Psoas muscle (tissue), 8 donors: ENCODE measurements at regions of chr16 and their contacts with region 1.

Region 1: DNA sequence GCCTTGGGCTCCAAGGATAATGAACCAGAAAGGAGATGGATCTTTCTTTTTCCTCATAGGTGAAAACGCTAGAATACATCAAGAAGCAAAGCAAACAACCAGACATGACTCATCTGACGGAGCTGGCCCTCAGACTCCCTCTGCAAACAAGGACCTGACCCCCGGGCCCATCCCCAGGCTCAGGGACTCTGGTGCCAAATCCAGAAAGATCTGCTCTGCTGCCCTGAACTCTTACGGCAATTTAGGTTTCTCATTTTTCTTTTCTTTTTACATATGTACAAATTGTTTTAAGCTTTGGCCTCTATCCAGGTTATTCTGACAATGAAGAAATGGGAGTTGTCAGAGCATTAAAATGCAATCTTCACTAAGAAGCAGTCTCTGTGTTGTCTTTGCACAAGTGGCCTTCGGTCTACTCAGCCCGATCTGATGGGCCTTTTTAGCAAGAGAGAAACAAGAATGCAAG is 17.7 kb downstream of the KNOP1 start:
- DNase-seq: no peak
- ATAC-seq: no peak
- H3K4me3 ChIP-seq: no peak overlapping the region
- H3K27ac ChIP-seq: peak overlapping the region; percentile 55
- H3K4me1 ChIP-seq: peaks cover 48% of the 10 kb centered on the region
- H3K27me3 ChIP-seq: no peaks in the 10 kb centered on the region
- CTCF ChIP-seq: no peak

Region 2: DNA sequence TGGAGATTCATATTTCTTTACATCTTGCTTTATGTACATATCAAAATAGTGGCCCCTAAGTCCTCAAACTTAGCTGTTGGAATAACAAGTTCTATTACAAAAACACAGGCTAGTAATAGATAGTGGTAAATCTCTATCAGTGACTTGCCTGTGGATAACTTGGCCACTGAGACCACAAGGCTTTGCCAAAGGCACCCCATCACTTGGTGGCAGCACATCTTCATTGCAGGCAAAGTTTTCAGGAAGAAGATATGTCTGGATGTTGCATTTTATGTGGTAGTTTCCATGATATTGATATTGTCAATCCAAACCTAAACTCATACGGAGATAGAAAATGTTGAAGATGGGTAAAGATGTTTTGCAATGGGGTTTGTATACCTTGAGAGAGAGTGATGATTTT is 40.8 kb before region 1 on chr16:
- intact Hi-C with region 1: loop called in 1 of 2 experiments (anchors 5 kb)
- DNase-seq: no peak
- ATAC-seq: no peak
- H3K4me3 ChIP-seq: no peak overlapping the region
- H3K27ac ChIP-seq: no peak overlapping the region
- H3K4me1 ChIP-seq: no peaks in the 10 kb centered on the region
- H3K27me3 ChIP-seq: no peaks in the 10 kb centered on the region
- CTCF ChIP-seq: no peak

Region 3: GRCh38 chr16:19745286-19746010 is 45.1 kb after region 1 on chr16:
- intact Hi-C with region 1: no loop called
- DNase-seq: no peak
- ATAC-seq: no peak
- H3K4me3 ChIP-seq: no peak overlapping the region
- H3K27ac ChIP-seq: no peak overlapping the region
- H3K4me1 ChIP-seq: no peaks in the 10 kb centered on the region
- H3K27me3 ChIP-seq: no peaks in the 10 kb centered on the region
- CTCF ChIP-seq: no peak

Region 4: DNA sequence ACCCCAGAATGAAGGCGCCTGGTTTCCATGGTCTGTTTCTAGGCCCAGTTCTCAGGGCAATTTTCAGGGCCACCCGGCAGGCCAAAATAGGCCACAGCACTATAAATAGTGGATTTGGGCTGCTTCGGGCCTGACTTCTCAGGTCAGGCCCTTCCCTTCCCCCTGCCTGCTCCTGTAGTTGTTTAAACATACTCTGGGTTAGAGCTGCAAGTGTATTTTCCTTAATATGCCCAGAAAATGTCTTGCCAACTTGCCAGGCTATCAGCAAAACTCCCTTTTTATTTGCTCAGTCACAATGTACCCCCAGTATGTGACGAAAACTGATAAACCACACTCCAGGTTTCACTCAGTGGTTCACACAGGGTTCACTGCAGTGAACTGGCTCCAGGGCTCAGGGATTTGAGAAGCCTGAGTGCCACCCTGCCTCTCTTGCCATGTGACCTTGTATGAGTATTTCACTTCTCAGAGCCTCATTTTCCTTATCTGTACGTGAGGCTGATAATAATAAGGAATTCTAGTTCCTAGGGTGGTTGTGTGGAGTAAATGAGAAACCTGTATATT is 107.8 kb after region 1 on chr16:
- intact Hi-C with region 1: no loop called
- DNase-seq: no peak
- ATAC-seq: peak in 3 of 4 donors; percentile 63 to 69 (median 63)
- H3K4me3 ChIP-seq: no peak overlapping the region
- H3K27ac ChIP-seq: peak overlapping the region; percentile 91
- H3K4me1 ChIP-seq: peaks cover 42% of the 10 kb centered on the region
- H3K27me3 ChIP-seq: no peaks in the 10 kb centered on the region
- CTCF ChIP-seq: no peak